Dorsolateral prefrontal cortex (tissue), 120 donors: ENCODE measurements at regions of chr1 and their contacts with region 1.

Region 1: GRCh38 chr1:11907275-11908094 is 18.7 kb downstream of the KIAA2013 start:
- DNase-seq: peak; percentile 81 to 96 (median 90)
- H3K4me3 ChIP-seq: peak overlapping the region in 57 of 59 donors; percentile 19 to 83 (median 67)
- H3K27ac ChIP-seq: peak overlapping the region; percentile 89 to 100 (median 99)
- H3K27me3 ChIP-seq: no peaks in the 10 kb centered on the region
- CTCF ChIP-seq: peak; percentile 48 to 98 (median 86)

Region 2: DNA sequence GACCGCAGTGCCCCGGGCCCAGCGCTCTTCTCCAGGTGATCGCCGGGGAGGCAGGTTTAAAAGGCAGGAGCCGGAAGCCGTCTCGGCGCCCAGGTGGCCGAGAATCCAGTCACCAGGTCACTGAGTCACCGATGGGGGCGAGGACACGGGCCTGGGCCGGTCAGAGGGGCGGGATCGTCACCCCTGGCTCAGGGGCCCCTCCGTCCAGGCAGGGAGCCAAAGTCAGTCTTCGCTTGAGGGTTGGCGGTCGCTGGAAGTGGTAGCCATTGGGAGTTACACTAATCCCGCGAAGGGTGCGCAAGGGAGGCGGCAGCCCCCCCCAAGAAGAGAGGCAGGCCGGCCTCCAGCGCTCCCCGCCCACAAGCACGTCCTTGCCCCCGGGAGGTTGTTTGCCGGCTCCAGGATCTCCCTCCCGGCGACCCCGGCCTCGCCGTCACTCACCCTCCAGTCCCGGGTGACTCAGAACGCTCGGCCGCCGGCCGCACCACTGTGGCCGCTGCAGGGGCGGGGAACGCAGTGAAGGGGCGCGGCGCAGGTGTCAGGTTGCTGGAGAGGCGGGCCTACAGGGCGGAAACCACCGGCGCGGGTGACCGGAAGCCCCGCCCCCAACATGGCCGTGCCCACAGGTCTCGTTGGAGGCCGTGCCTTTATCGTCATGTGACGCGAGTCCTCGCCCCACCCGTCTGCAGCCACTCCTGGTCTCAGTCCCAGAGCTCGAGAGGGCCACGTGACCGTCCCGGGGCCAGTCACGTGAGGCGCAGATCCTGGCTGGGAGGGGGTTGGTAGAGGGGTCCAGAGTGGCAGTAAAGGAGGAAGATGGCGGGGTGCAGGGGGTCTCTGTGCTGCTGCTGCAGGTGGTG is 101.8 kb before region 1 on chr1 and contains the starts of genes CLCN6 and MTHFR:
- intact Hi-C with region 1: loop called in 1 of 2 experiments (anchors 5 kb)
- DNase-seq: peak; percentile 99
- H3K4me3 ChIP-seq: peak within 1 kb of the TSS; percentile 61 to 100 (median 93)
- H3K27ac ChIP-seq: peak within 1 kb of the TSS; percentile 88 to 99 (median 95)
- H3K27me3 ChIP-seq: no peaks in the 10 kb centered on the region
- CTCF ChIP-seq: peak in 16 of 56 donors; percentile 4 to 40 (median 22)
- total RNA-seq, gene CLCN6: 51.7 to 92.9 (median 69.7) TPM
- total RNA-seq, gene MTHFR: 31.4 to 70.6 (median 41.5) TPM

Region 3: GRCh38 chr1:11838349-11839272 is 68.9 kb before region 1 on chr1:
- intact Hi-C with region 1: loop called (anchors 5 kb)
- DNase-seq: peak; percentile 65 to 89 (median 76)
- H3K4me3 ChIP-seq: peak overlapping the region in 1 of 59 donors; percentile 18
- H3K27ac ChIP-seq: peak overlapping the region in 7 of 59 donors; percentile 3 to 38 (median 28)
- H3K27me3 ChIP-seq: no peaks in the 10 kb centered on the region
- CTCF ChIP-seq: peak; percentile 84 to 100 (median 97)

Region 4: DNA sequence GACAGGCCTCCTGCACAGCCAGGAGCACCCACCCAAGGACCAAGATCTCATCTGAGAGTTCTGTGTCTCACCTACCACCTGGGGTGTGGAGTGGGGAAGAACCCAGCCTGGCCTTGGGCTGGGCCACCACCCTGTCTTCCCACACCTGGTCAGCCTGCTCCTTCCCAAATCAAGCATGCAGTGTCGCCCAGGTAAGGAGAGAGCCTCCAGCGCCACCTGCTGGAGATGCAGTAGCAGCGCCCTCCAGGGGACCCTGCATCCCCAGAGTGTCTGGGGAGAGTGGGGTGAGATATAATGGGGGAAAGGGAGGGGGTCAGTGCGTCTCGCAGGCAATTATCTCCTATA is 13.6 kb before region 1 on chr1:
- intact Hi-C with region 1: no loop called
- DNase-seq: peak in 7 of 10 donors; percentile 27 to 75 (median 46)
- H3K4me3 ChIP-seq: no peak overlapping the region
- H3K27ac ChIP-seq: no peak overlapping the region
- H3K27me3 ChIP-seq: peaks cover 0 to 22% (median 10%) of the 10 kb centered on the region in 45 donors
- CTCF ChIP-seq: peak; percentile 44 to 87 (median 78)

Region 5: DNA sequence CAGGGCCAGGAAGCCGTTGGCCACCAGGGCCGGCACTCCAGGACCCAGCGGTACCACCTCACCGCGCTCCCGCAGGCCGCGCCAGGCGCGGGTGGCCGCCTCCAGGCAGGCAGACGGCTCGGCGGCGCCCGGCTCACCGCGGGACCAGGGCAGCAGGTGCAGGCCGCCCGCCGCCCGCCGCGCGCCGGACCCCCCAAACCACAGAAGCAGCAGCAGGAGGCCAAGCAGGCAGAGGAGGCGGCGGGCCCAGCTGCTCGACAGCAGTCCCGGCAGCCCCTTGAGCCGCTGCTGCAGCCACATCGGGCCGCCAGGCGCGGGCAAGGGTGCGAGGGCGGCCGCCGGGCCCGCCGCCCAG is 18.4 kb after region 1 on chr1:
- intact Hi-C with region 1: loop called (anchors 1 to 2 kb)
- DNase-seq: no peak
- H3K4me3 ChIP-seq: peak overlapping the region; percentile 38 to 84 (median 63)
- H3K27ac ChIP-seq: peak overlapping the region in 12 of 59 donors; percentile 18 to 80 (median 62)
- H3K27me3 ChIP-seq: no peaks in the 10 kb centered on the region
- CTCF ChIP-seq: no peak

Region 6: DNA sequence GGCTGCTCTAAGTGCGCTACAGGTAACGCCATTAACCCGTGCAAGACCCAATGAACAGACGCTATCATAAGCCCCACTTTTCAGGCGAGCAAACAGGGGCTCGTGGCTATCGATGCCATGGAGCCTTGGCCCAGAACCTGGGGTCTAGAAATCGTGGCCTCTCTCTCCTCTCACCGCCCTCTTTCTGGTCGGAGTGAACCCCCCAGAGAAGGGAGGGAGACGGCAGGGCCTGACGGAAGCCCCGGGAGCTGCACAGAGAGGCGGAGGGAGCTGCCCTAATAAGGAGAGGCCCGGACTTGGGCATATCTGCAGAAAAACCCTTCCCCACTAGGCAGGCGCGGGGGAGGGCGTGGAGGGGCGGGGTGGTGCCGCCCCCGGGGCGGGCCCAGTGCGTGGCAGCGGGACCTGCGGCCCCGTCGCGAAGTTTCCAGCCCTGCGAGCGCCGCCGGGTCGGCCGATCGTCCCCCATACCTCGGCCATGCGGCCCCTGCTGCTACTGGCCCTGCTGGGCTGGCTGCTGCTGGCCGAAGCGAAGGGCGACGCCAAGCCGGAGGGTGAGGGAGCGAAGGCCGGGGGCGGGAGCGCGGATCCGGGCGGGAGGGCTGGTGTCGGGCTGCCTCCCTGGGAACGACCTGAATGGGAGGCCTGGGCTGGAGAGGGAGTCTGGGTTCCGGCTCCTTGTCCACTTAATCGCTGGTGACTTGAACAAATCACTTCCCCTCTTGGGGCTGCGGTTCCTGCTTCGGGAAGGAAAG is 27.0 kb after region 1 on chr1 and contains the start of gene PLOD1:
- intact Hi-C with region 1: loop called in 1 of 2 experiments (anchors 2 kb)
- DNase-seq: peak; percentile 62 to 90 (median 80)
- H3K4me3 ChIP-seq: peak within 1 kb of the TSS; percentile 49 to 97 (median 78)
- H3K27ac ChIP-seq: peak within 1 kb of the TSS; percentile 65 to 97 (median 91)
- H3K27me3 ChIP-seq: no peaks in the 10 kb centered on the region
- CTCF ChIP-seq: peak in 9 of 56 donors; percentile 6 to 42 (median 22)
- total RNA-seq, gene PLOD1: 28.5 to 148 (median 43.7) TPM

Region 7: DNA sequence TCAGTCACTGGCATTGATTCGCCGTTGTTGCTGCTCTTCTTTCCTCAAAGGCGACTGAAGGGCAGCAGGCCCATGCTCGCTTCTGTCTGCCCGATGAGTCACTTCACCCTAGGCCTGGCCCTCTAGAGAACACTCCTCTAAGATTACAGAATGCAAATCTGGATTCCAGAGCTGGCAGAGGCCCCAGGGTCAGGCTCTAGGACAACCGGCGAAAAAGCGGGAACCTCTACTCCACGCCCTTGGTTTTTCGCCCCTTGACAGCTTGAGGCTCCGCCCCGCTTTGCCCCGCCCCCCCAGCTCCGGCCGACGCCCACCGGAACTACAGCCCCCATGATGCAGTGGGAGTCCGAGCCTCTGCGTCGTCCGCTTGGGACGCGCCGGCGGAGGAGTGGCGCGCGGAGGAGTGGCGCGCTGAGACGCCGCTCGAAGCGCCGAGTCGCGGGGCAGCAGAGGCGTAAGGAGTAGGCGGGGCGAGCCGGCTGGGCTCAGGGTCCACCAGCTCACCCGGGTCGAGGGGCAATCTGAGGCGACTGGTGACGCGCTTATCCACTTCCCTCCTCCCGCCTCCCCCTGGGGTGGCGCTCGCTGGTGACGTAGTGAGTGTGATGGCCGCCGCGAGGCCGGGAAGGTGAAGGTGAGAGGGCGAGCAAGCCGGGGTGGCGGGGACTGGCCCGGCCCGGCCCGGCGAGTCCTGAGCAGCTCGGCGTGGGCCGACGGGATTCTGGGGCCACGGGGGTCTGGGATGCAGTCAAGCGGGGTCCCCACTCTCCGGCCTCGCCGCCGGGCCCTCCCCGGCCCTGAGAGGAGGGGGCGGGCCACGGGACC is 72.6 kb after region 1 on chr1 and contains the start of gene MFN2:
- intact Hi-C with region 1: loop called (anchors 1 kb)
- DNase-seq: peak; percentile 85 to 95 (median 94)
- H3K4me3 ChIP-seq: peak within 1 kb of the TSS; percentile 57 to 100 (median 94)
- H3K27ac ChIP-seq: peak within 1 kb of the TSS; percentile 53 to 98 (median 94)
- H3K27me3 ChIP-seq: no peaks in the 10 kb centered on the region
- CTCF ChIP-seq: peak in 29 of 56 donors; percentile 7 to 60 (median 23)
- total RNA-seq, gene MFN2: 107 to 182 (median 141) TPM

Region 8: DNA sequence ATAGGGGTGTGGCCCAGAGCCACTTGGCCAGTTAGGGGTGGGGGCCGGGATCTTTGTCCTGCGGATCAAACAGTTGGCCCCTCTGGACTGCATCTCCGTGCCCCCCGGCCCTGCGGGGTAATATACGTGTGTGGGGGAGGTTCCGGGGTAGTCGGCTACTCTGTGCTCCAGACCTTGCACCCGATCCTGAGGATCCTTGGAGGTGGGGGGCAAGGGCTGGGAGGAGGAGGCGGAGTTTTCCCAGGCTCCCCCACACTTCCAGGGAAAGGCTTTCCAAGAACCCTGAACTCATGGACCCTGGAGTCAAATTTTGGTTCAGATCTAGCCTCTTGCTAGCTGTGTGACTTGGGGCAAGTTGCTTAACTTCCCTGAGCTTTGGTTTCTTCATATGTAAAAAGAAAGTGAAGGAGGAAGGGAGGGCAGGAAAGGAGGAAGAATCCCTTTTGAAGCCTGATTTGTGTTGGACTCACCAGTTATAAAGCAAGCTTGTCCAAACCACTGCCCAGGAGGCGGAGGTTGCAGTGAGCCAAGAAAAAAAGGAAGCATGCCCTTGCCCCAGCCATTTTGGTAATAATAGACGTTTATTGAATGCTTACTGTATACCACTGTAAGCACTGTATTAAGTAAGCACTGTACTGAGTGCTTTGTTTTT is 112.5 kb after region 1 on chr1:
- intact Hi-C with region 1: loop called in 1 of 2 experiments (anchors 2 kb)
- DNase-seq: peak in 1 of 10 donors; percentile 52
- H3K4me3 ChIP-seq: peak overlapping the region; percentile 59 to 100 (median 93)
- H3K27ac ChIP-seq: peak overlapping the region in 53 of 59 donors; percentile 4 to 92 (median 74)
- H3K27me3 ChIP-seq: no peaks in the 10 kb centered on the region
- CTCF ChIP-seq: no peak

Region 9: GRCh38 chr1:12196641-12197482 is 289.4 kb after region 1 on chr1:
- intact Hi-C with region 1: no loop called
- DNase-seq: no peak
- H3K4me3 ChIP-seq: no peak overlapping the region
- H3K27ac ChIP-seq: peak overlapping the region in 7 of 59 donors; percentile 1 to 48 (median 16)
- H3K27me3 ChIP-seq: peaks cover 0 to 4% (median 0%) of the 10 kb centered on the region in 45 donors
- CTCF ChIP-seq: peak in 11 of 56 donors; percentile 2 to 30 (median 16)